ENCODE measurements at regions of chr11 and their contacts with region 1.

Region 1: GRCh38 chr11:73760679-73761402 is at the start of gene RAB6A:
- DNase-seq: peak; percentile 100
- H3K4me3 Mint-ChIP-seq: peak within 1 kb of the TSS; percentile 88
- H3K27ac Mint-ChIP-seq: peak within 1 kb of the TSS; percentile 90
- H3K4me1 Mint-ChIP-seq: peaks cover 34% of the 10 kb centered on the region
- H3K27me3 Mint-ChIP-seq: no peaks in the 10 kb centered on the region
- total RNA-seq, gene RAB6A: 36.7 to 41.2 TPM

Region 2: DNA sequence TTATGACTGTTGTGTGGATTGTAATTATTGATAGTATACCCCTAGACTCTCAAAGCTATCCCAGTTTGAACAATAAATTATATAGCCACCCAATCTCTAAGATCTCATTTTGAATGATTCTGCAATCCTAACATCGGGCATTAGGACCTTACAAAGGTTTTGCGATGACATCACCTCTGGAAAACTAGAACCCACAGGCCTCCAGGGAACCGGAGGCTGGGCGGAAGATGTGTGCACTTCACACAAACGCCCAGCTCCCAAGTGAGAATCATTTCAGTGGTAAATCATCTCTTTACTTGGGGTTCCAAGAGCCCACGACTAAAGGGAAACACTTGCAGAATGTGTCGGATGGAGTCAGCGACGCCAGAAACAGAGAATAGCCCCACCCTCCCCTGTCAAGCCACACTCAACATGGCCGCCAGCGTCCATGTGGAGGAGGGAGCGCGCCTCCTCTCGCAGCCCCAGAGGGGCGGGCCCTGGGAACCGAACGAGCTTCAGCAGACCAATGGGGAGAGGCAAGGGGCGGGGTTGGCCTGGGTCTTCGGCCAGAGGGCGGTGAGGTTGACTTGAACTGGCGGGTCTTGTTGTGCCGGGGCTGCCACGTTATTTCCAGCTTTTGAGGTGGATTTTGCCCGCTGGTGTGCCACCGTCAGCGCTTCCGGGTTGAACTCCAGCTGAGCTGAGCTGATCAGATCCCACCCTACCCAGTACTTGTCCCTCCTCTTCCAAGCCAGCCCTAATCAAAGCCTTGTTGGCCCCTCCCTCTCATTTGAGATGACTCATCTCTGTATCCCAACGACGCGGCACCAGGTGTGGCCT is 18.5 kb after region 1 on chr11:
- CTCF ChIA-PET with region 1: interaction called, 10 read pairs
- intact Hi-C with region 1: loop called (anchors 1 kb)
- DNase-seq: peak; percentile 99
- H3K4me3 Mint-ChIP-seq: peak overlapping the region; percentile 85
- H3K27ac Mint-ChIP-seq: peak overlapping the region; percentile 98
- H3K4me1 Mint-ChIP-seq: peaks cover 14% of the 10 kb centered on the region
- H3K27me3 Mint-ChIP-seq: no peaks in the 10 kb centered on the region

Region 3: DNA sequence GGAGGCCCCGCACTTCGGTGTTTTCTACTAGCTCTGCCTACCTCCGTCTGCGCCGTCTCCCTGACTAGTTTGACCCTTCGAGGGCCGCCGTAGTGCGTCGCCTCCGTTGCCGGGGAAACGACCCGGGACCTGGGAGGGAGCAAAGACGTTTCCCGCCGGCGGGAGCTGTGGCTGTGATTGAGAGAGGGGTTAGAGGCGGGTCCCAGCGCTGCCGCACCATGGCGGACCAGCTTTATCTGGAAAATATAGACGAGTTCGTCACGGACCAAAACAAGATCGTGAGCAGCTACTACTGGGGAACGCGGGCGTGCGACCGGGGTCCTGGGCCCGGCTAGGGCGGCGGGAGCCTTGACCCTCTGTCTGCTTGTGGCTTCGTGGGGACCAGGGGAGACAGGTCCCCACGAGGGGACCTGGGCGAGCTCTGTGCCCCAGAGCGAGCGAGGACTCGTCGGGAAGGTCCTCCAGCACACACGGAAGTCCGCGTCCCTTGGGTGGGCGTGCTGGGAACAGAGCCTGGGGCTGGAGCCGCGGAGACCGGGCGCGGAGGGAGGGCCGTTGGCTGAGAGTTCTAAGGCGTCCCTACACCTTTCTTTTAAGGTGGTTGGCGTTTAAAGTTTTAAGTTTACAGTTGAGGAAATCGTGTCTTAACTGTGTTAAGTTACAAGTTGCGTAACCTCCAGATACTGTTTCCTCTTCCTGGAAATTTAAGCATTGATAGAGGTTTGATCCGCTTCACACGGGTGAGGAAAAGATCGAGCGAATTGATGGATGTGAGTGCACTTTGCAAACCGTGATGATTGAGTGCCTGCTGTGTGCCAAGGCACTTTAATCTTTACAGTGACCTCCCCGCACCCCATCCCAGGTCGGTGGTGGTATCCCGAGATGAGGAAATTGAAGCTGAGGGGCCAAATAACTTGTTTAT is 831.9 kb after region 1 on chr11 and contains the start of gene POLD3:
- CTCF ChIA-PET with region 1: no interaction called
- intact Hi-C with region 1: loop called (anchors 1 kb)
- DNase-seq: peak; percentile 98
- H3K4me3 Mint-ChIP-seq: peak within 1 kb of the TSS; percentile 89
- H3K27ac Mint-ChIP-seq: peak within 1 kb of the TSS; percentile 98
- H3K4me1 Mint-ChIP-seq: peaks cover 28% of the 10 kb centered on the region
- H3K27me3 Mint-ChIP-seq: no peaks in the 10 kb centered on the region
- total RNA-seq, gene POLD3: 84.8 to 91.9 TPM

Measured in activated naive CD4-positive, alpha-beta T cell treated with anti-CD3 and anti-CD28 coated beads for 36 hours (primary cell).